ENCODE measurements at regions of chr9 and their contacts with region 1.

Region 1: GRCh38 chr9:87324613-87325194 is 173.0 kb upstream of the DAPK1 start:
- DNase-seq: no peak
- ATAC-seq: no peak
- H3K4me3 Mint-ChIP-seq: no peak overlapping the region
- H3K27ac Mint-ChIP-seq: no peak overlapping the region
- H3K4me1 Mint-ChIP-seq: no peaks in the 10 kb centered on the region
- H3K27me3 Mint-ChIP-seq: peaks cover 1% of the 10 kb centered on the region
- CTCF ChIP-seq: peak; percentile 78

Region 2: GRCh38 chr9:86486891-86487837 is 837.5 kb before region 1 on chr9:
- CTCF ChIA-PET with region 1: interaction called, 19 read pairs
- POLR2A ChIA-PET with region 1: no interaction called
- intact Hi-C with region 1: no loop called
- DNase-seq: no peak
- ATAC-seq: no peak
- H3K4me3 Mint-ChIP-seq: no peak overlapping the region
- H3K27ac Mint-ChIP-seq: no peak overlapping the region
- H3K4me1 Mint-ChIP-seq: peaks cover 7% of the 10 kb centered on the region
- H3K27me3 Mint-ChIP-seq: no peaks in the 10 kb centered on the region
- CTCF ChIP-seq: peak; percentile 37

Region 3: DNA sequence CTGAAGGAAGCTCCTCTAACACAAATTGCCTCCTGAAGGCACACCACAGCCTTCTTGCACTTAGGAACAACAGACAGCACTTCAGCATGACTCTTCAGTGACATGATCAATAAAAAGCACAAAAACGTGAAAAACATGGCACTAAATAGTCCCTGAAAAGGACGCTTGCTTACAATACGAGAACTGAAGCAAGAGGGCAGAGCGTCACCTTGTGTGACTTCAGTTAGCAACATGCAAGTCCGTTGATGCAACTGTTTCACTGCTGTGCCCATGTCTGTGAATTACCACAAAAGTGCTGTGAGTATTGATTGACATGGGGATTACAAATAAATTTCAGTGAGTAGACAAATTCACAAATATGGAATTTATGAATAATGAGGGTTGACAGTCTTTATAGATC is 157.5 kb before region 1 on chr9:
- CTCF ChIA-PET with region 1: no interaction called
- POLR2A ChIA-PET with region 1: no interaction called
- intact Hi-C with region 1: no loop called
- DNase-seq: no peak
- ATAC-seq: no peak
- H3K4me3 Mint-ChIP-seq: no peak overlapping the region
- H3K27ac Mint-ChIP-seq: no peak overlapping the region
- H3K4me1 Mint-ChIP-seq: no peaks in the 10 kb centered on the region
- H3K27me3 Mint-ChIP-seq: peaks cover 13% of the 10 kb centered on the region
- CTCF ChIP-seq: no peak

Measured in activated CD8-positive, alpha-beta T cell treated with anti-CD3 and anti-CD28 coated beads for 36 hours (primary cell).